Naive thymus-derived CD4-positive, alpha-beta T cell (primary cell): ENCODE measurements at regions of chr11 and their contacts with region 1.

Region 1: GRCh38 chr11:75532200-75533048 is 6.7 kb upstream of the GDPD5 start:
- DNase-seq: peak; percentile 63 to 83 (median 76)
- ATAC-seq: peak; percentile 91
- H3K4me3 ChIP-seq: no peak overlapping the region
- H3K4me3 Mint-ChIP-seq: peak overlapping the region in 3 of 10 donors; percentile 1 to 59 (median 41)
- H3K27ac ChIP-seq: no peak overlapping the region
- H3K27ac Mint-ChIP-seq: peak overlapping the region in 4 of 9 donors; percentile 11 to 83 (median 62)
- H3K4me1 ChIP-seq: peaks cover 5 to 14% of the 10 kb centered on the region in 2 donors
- H3K4me1 Mint-ChIP-seq: peaks cover 8 to 61% (median 22%) of the 10 kb centered on the region in 7 donors
- H3K27me3 ChIP-seq: no peaks in the 10 kb centered on the region
- H3K27me3 Mint-ChIP-seq: peaks cover 0 to 7% (median 0%) of the 10 kb centered on the region in 5 donors

Region 2: DNA sequence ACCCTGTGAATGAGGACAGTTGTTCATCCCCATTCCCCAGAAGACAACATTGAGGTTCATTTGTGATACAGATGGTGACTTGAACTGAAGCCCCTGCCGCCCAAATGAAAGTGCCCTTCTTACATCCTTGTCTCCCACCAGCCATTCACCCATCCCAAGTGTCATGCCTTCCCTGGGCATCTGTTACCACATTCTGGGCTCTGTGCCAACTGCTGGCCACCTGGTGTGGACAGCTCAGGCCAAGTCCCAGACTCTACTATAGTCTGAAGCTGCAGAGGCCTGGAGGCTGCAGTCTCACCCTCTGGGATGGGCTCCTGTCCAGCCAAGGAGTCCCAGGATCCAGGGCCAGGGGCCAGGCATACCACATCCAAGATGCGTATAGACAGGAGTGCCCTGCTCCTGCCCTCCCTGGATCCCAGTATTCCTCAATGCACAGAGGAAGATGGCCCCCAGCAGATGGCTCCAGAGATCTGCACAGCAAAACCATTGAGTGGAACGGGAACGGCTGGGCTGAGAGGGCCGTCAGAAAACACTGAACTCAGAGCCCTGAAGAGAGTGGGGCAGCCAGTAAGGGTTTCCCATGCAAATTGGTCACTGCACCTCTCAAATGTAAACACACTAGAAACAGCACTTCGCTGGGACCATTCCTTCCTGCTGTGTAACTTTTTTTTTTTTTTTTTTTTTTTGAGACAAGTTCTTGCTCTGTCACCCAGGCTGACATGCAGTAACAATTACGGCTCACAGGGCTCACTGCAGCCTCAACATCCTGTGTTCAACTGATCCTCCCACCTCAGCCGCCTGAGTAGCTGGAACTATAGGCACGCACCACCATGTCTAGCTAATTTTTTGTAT is 203.8 kb before region 1 on chr11:
- CTCF ChIA-PET with region 1: interaction called, 3 read pairs
- POLR2A ChIA-PET with region 1: no interaction called
- intact Hi-C with region 1: loop called in 1 of 2 experiments (anchors 5 kb)
- DNase-seq: peak in 8 of 9 donors; percentile 44 to 82 (median 66)
- ATAC-seq: peak; percentile 92
- H3K4me3 ChIP-seq: no peak overlapping the region
- H3K4me3 Mint-ChIP-seq: peak overlapping the region; percentile 9 to 75 (median 68)
- H3K27ac ChIP-seq: peak overlapping the region; percentile 58
- H3K27ac Mint-ChIP-seq: peak overlapping the region; percentile 79 to 96 (median 91)
- H3K4me1 ChIP-seq: peaks cover 16 to 54% of the 10 kb centered on the region in 2 donors
- H3K4me1 Mint-ChIP-seq: peaks cover 47 to 88% (median 80%) of the 10 kb centered on the region in 7 donors
- H3K27me3 ChIP-seq: no peaks in the 10 kb centered on the region
- H3K27me3 Mint-ChIP-seq: no peaks in the 10 kb centered on the region

Region 3: DNA sequence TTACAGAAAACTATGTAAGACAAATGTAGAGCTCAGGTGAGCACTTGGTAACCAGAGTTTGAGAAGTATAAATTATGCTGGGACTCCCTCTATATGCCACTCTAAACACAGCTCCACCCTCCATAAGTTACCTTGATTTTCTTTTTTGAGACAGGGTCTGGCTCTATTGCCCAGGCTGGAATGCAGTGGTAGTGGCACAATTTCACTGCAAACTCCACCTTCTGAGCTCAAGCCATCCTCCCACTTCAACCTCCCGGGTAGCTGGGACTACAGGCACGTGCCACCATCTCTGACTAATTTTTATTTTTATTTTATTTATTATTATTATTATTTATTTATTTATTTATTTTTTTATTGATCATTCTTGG is 123.6 kb before region 1 on chr11:
- CTCF ChIA-PET with region 1: interaction called, 3 read pairs
- POLR2A ChIA-PET with region 1: no interaction called
- intact Hi-C with region 1: loop called in 1 of 2 experiments (anchors 1 kb)
- DNase-seq: no peak
- ATAC-seq: no peak
- H3K4me3 ChIP-seq: no peak overlapping the region
- H3K4me3 Mint-ChIP-seq: no peak overlapping the region
- H3K27ac ChIP-seq: no peak overlapping the region
- H3K27ac Mint-ChIP-seq: no peak overlapping the region
- H3K4me1 ChIP-seq: no peaks in the 10 kb centered on the region
- H3K4me1 Mint-ChIP-seq: peaks cover 0 to 31% (median 17%) of the 10 kb centered on the region in 7 donors
- H3K27me3 ChIP-seq: no peaks in the 10 kb centered on the region
- H3K27me3 Mint-ChIP-seq: no peaks in the 10 kb centered on the region

Region 4: DNA sequence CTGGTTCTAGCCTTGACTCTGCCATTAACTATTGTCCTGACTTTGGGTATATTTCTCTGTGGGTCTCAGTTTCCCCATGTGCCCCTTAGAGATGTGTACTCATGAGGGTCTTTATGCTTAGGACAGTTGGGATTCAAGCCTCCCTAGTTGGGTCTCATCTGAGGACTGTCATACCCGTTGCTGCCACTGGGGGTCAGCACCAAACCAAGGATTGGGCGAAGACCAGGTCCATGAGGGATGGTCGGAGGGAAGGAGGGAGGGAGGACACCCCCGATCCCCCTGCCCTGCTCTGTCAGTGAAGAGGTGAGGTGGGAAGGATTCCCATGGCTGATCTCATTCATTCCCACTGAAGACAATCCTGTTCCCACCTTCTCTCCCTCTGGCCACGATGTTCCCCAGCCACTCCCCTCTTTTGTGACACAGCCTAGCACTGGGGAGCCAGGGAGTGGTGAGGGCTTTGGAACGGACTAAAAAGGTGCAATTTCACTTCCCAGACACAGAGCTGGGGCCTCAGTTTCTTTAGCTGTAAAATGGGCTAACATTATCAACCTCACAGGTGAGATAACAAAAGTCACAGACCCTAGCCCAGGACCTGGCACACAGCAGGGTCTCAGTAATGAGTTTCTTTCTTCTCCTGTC is 87.0 kb before region 1 on chr11:
- CTCF ChIA-PET with region 1: interaction called, 147 read pairs
- POLR2A ChIA-PET with region 1: interaction called, 5 read pairs
- intact Hi-C with region 1: loop called (anchors 1 kb)
- DNase-seq: peak; percentile 38 to 76 (median 66)
- ATAC-seq: peak; percentile 90
- H3K4me3 ChIP-seq: no peak overlapping the region
- H3K4me3 Mint-ChIP-seq: no peak overlapping the region
- H3K27ac ChIP-seq: no peak overlapping the region
- H3K27ac Mint-ChIP-seq: no peak overlapping the region
- H3K4me1 ChIP-seq: no peaks in the 10 kb centered on the region
- H3K4me1 Mint-ChIP-seq: peaks cover 0 to 3% (median 0%) of the 10 kb centered on the region in 7 donors
- H3K27me3 ChIP-seq: no peaks in the 10 kb centered on the region
- H3K27me3 Mint-ChIP-seq: no peaks in the 10 kb centered on the region

Region 5: DNA sequence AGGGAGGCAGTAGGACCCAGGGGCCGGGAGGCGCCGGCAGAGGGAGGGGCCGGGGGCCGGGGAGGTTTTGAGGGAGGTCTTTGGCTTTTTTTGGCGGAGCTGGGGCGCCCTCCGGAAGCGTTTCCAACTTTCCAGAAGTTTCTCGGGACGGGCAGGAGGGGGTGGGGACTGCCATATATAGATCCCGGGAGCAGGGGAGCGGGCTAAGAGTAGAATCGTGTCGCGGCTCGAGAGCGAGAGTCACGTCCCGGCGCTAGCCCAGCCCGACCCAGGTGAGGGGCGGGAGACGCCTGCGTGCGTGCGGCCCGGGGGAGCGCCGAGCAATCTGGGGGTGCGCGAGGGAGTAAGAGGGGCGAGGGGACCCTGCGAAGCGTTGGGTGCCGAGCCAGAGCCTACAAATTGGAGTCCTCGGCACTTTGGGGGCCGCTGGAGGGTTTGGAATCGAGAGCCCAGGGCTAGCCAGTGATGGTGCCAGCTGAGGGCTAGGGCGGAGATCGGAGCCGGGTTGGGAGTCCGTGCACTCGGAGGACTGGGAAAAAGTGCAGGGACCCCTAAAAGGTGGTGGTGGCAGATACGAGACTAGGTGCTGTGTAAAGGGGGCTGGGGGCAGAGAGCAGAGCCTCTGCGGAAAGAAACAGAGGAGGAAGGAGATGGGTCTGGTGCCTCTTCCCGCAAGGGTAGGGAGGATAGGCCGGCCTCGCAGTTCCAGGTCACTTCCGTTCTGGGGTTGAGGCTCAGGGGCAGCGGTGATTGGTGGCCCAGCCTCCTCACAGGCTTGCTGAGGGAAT is 29.8 kb after region 1 on chr11 and contains the start of gene SERPINH1:
- CTCF ChIA-PET with region 1: interaction called, 6 read pairs
- POLR2A ChIA-PET with region 1: no interaction called
- intact Hi-C with region 1: loop called in 1 of 2 experiments (anchors 2 kb)
- DNase-seq: peak; percentile 29 to 73 (median 45)
- ATAC-seq: peak; percentile 80
- H3K4me3 ChIP-seq: peak within 1 kb of the TSS; percentile 91
- H3K4me3 Mint-ChIP-seq: peak within 1 kb of the TSS; percentile 94 to 99 (median 99)
- H3K27ac ChIP-seq: peak within 1 kb of the TSS; percentile 86
- H3K27ac Mint-ChIP-seq: peak within 1 kb of the TSS; percentile 87 to 97 (median 95)
- H3K4me1 ChIP-seq: peaks cover 15 to 22% of the 10 kb centered on the region in 2 donors
- H3K4me1 Mint-ChIP-seq: peaks cover 18 to 46% (median 32%) of the 10 kb centered on the region in 7 donors
- H3K27me3 ChIP-seq: no peaks in the 10 kb centered on the region
- H3K27me3 Mint-ChIP-seq: peaks cover 0 to under 1% (median 0%) of the 10 kb centered on the region in 5 donors
- total RNA-seq, gene SERPINH1: 5.1 to 19.9 (median 13.2) TPM